Motor neuron (in vitro differentiated cells): ENCODE measurements at regions of chr3 and their contacts with region 1.

Region 1: DNA sequence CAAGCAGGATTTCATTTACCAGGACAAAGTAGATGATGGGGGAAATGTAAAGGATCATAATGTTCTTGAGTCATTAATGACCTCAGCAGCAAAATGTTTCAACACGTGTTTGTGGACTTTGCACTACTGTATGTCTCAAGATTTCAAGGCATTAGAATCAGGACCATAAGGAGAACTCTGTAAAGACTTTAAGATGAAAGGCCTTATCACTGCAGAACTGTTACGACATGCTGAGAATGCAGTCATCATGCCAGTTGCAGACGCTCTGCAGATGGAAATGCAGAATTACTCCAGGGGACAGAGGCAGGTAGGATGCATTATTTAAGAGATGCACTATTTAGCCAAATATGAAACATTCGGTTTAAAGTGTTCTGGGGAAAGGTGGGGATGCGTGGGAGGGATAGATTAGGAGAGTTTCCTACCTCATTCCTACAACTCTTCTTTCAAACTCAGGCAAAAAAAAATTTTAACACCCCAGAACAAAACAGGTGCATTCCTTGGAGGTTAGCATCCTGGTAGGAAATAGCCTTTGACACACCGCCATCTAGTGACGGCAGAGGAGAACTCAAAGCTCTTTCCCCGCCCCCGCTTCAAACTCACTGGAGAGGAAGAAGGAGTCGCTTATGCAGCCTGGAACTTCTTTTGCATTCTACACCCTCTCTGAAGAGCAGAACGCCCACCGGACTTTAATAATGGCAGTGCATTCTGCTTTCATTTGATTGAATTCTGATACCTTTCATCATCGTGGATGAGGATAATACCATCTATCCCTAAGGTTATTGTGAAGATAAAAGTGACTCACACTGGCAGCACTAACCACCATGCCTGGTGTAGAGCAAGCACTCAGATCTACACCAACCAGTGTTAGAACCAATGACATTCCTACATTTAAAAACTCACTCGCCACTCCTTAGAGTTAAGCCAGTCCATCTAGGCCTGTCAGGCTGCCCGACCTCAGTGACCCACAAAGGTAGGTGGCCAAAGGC is 43.1 kb upstream of the TOPAZ1 start:
- ATAC-seq: peak; percentile 71 to 97 (median 88)
- H3K4me3 ChIP-seq: no peak overlapping the region
- H3K27ac ChIP-seq: no peak overlapping the region
- H3K4me1 ChIP-seq: no peaks in the 10 kb centered on the region

Region 2: GRCh38 chr3:43540624-43541023 is 658.0 kb before region 1 on chr3:
- in situ Hi-C with region 1: loop called in 2 of 9 experiments (anchors 10 to 25 kb)
- ATAC-seq: peak in 3 of 8 experiments; percentile 36 to 91 (median 76)
- H3K4me3 ChIP-seq: no peak overlapping the region
- H3K27ac ChIP-seq: no peak overlapping the region
- H3K4me1 ChIP-seq: peaks cover 0 to 7% of the 10 kb centered on the region in 2 donors

Region 3: GRCh38 chr3:43769471-43770425 is 428.8 kb before region 1 on chr3:
- in situ Hi-C with region 1: loop called in 1 of 9 experiments (anchors 10 kb)
- ATAC-seq: peak; percentile 83 to 99 (median 86)
- H3K4me3 ChIP-seq: peak overlapping the region in 1 of 5 donors; percentile 10
- H3K27ac ChIP-seq: peak overlapping the region in 1 of 2 donors; percentile 59
- H3K4me1 ChIP-seq: peaks cover 25 to 39% of the 10 kb centered on the region in 2 donors

Region 4: DNA sequence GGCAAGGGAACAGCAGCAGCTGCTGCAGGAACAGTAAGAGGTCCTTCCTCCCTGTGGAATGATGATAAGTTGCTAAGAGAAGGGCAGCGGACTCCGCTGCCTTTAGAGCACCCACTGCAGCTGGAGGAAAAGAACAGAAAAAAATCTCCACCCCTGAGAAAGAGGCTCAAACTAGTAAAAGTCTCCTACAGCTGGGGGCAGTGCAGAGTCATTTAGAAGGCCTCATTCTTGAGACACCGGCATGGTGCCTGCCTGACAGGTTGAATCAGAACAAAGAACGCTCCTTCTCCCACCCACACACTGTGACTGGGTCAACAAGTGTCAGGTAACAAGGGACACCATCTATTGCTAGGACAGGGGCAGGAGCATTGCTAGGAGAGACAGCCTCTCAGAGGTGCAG is 319.4 kb before region 1 on chr3:
- in situ Hi-C with region 1: loop called in 1 of 9 experiments (anchors 10 kb)
- ATAC-seq: peak; percentile 33 to 82 (median 54)
- H3K4me3 ChIP-seq: no peak overlapping the region
- H3K27ac ChIP-seq: no peak overlapping the region
- H3K4me1 ChIP-seq: no peaks in the 10 kb centered on the region

Region 5: GRCh38 chr3:44000586-44000985 is 198.0 kb before region 1 on chr3:
- in situ Hi-C with region 1: loop called in 2 of 9 experiments (anchors 25 kb)
- ATAC-seq: peak in 3 of 8 experiments; percentile 3 to 37 (median 25)
- H3K4me3 ChIP-seq: peak overlapping the region in 4 of 5 donors; percentile 1 to 85 (median 56)
- H3K27ac ChIP-seq: no peak overlapping the region
- H3K4me1 ChIP-seq: peaks cover 9 to 13% of the 10 kb centered on the region in 2 donors